Heart left ventricle (tissue), 16 donors: ENCODE measurements at regions of chr4 and their contacts with region 1.

Region 1: GRCh38 chr4:37452952-37453280 is 208.4 kb downstream of the NWD2 start:
- DNase-seq: peak in 2 of 5 donors; percentile 9 to 27
- ATAC-seq: peak; percentile 55 to 85 (median 66)
- H3K4me3 ChIP-seq: peak overlapping the region in 8 of 12 donors; percentile 45 to 63 (median 53)
- H3K27ac ChIP-seq: no peak overlapping the region
- H3K4me1 ChIP-seq: peaks cover 0 to 15% (median 6%) of the 10 kb centered on the region in 12 donors
- H3K27me3 ChIP-seq: peaks cover 6 to 76% (median 19%) of the 10 kb centered on the region in 9 donors
- CTCF ChIP-seq: peak in 11 of 12 donors; percentile 16 to 58 (median 44)
- POLR2A ChIP-seq: no peak

Region 2: GRCh38 chr4:37367901-37368300 is 85.0 kb before region 1 on chr4:
- intact Hi-C with region 1: no loop called
- DNase-seq: no peak
- ATAC-seq: no peak
- H3K4me3 ChIP-seq: no peak overlapping the region
- H3K27ac ChIP-seq: no peak overlapping the region
- H3K4me1 ChIP-seq: no peaks in the 10 kb centered on the region
- H3K27me3 ChIP-seq: peaks cover 0 to 3% (median 0%) of the 10 kb centered on the region in 9 donors
- CTCF ChIP-seq: no peak
- POLR2A ChIP-seq: no peak

Region 3: GRCh38 chr4:37561803-37562207 is 108.9 kb after region 1 on chr4:
- intact Hi-C with region 1: loop called (anchors 1 to 5 kb)
- DNase-seq: no peak
- ATAC-seq: no peak
- H3K4me3 ChIP-seq: no peak overlapping the region
- H3K27ac ChIP-seq: no peak overlapping the region
- H3K4me1 ChIP-seq: no peaks in the 10 kb centered on the region
- H3K27me3 ChIP-seq: no peaks in the 10 kb centered on the region
- CTCF ChIP-seq: no peak
- POLR2A ChIP-seq: no peak

Region 4: DNA sequence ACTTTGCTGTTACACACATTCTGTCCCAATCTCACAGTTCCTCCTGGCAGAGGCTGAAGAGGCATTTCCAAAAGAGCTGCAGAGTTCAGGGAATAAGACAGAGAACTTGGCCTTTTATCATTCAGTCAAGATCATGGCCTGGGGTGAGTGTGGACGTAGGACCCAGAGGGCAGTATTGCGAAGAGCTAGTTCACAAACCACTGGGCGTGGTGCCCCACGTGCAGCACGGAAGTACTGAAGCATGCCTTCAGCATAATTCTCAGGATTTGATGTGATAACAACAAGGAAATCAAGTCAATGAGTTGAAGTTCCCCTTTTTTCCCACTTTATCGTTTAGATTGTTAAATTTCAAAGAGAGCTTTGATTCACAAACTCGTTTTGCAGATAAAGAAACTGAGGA is 115.6 kb after region 1 on chr4:
- intact Hi-C with region 1: loop called (anchors 1 to 5 kb)
- DNase-seq: no peak
- ATAC-seq: no peak
- H3K4me3 ChIP-seq: no peak overlapping the region
- H3K27ac ChIP-seq: no peak overlapping the region
- H3K4me1 ChIP-seq: no peaks in the 10 kb centered on the region
- H3K27me3 ChIP-seq: no peaks in the 10 kb centered on the region
- CTCF ChIP-seq: no peak
- POLR2A ChIP-seq: no peak